ENCODE measurements at regions of chr5 and their contacts with region 1.

Region 1: GRCh38 chr5:134411546-134412266 is at the start of gene CDKN2AIPNL:
- DNase-seq: peak; percentile 34
- ATAC-seq: peak; percentile 99
- H3K4me3 ChIP-seq: peak within 1 kb of the TSS; percentile 85
- H3K27ac ChIP-seq: peak within 1 kb of the TSS; percentile 69
- H3K4me1 ChIP-seq: peaks cover 4% of the 10 kb centered on the region; the same call in 1 of the 2 replicates
- H3K27me3 ChIP-seq: no peaks in the 10 kb centered on the region
- CTCF ChIP-seq: peak; percentile 76 to 88 (median 81)
- EP300 ChIP-seq: peak in 1 of 2 experiments; percentile 46; a peak in 1 of 4 replicates
- POLR2A ChIP-seq: peak; percentile 94
- RAD21 ChIP-seq: peak; percentile 66
- polyA plus RNA-seq, gene CDKN2AIPNL: 23.5 to 29.9 TPM

Region 2: DNA sequence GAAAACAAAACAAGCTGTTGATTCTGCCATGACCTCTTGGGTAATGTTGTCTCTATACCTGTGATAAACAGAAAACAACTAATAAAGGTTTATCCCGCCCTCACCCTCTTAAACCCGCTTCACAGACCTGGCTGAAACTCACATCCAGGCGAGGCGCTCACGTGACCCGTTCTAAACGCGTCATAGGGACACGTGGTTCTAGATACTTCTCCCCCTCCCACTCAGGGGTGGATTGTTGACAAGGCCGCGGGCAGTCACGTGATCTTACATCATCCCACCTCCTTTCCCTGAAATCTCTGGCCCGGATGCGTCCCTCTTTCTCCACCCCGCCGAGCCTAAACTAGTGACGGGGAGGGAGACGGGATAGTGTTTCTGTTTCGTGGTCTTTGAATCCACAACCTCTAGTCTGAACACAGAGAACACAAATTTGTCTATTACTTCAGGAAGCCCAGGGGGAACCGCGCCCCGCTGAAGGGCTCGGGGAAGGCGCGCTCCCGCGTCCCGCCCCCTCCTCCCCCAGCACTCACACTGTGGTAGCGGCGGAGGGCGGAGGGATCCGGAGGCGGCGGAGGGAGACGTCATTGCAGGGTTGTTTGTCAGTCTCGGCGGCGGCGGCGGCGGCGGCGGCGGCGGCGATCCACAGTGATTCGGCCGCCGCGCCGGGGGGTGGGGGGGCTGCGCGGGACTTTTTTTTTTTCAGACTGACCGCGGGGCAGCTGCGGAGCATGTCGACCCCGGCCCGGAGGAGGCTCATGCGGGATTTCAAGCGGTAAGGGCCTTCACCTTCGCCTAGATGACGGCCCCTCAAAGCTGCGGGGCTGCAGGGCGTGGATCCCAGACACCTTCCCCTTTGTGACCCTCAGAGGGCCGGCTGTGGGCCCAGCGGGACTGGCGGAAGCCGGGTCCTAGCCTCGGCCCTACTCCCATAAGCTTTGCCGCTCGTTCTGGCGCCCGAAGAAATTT is 40.6 kb before region 1 on chr5 and contains the start of gene UBE2B:
- CTCF ChIA-PET with region 1: interaction called, 15 read pairs
- POLR2A ChIA-PET with region 1: interaction called, 12 read pairs
- RAD21 ChIA-PET with region 1: interaction called, 6 read pairs
- SMC1A ChIA-PET with region 1: interaction called, 29 read pairs
- in situ Hi-C with region 1: no loop called
- intact Hi-C with region 1: no loop called
- DNase-seq: peak; percentile 97
- ATAC-seq: peak; percentile 75
- H3K4me3 ChIP-seq: peak within 1 kb of the TSS; percentile 99
- H3K27ac ChIP-seq: peak within 1 kb of the TSS; percentile 89
- H3K4me1 ChIP-seq: peaks cover 2% of the 10 kb centered on the region; the same call in 1 of the 2 replicates
- H3K27me3 ChIP-seq: no peaks in the 10 kb centered on the region
- CTCF ChIP-seq: no peak
- EP300 ChIP-seq: peak in 1 of 2 experiments; percentile 73
- POLR2A ChIP-seq: peak; percentile 76
- RAD21 ChIP-seq: no peak
- polyA plus RNA-seq, gene UBE2B: 126 to 154 TPM

Region 3: GRCh38 chr5:134430001-134430569 is 18.4 kb after region 1 on chr5:
- CTCF ChIA-PET with region 1: interaction called, 11 read pairs
- POLR2A ChIA-PET with region 1: interaction called, 3 read pairs
- RAD21 ChIA-PET with region 1: interaction called, 6 read pairs
- SMC1A ChIA-PET with region 1: interaction called, 6 read pairs
- in situ Hi-C with region 1: no loop called
- intact Hi-C with region 1: no loop called
- DNase-seq: no peak
- ATAC-seq: peak; percentile 67
- H3K4me3 ChIP-seq: no peak overlapping the region
- H3K27ac ChIP-seq: no peak overlapping the region
- H3K4me1 ChIP-seq: peaks cover 6% of the 10 kb centered on the region; the same call in 1 of the 2 replicates
- H3K27me3 ChIP-seq: no peaks in the 10 kb centered on the region
- CTCF ChIP-seq: no peak
- EP300 ChIP-seq: no peak
- POLR2A ChIP-seq: no peak
- RAD21 ChIP-seq: no peak

Region 4: DNA sequence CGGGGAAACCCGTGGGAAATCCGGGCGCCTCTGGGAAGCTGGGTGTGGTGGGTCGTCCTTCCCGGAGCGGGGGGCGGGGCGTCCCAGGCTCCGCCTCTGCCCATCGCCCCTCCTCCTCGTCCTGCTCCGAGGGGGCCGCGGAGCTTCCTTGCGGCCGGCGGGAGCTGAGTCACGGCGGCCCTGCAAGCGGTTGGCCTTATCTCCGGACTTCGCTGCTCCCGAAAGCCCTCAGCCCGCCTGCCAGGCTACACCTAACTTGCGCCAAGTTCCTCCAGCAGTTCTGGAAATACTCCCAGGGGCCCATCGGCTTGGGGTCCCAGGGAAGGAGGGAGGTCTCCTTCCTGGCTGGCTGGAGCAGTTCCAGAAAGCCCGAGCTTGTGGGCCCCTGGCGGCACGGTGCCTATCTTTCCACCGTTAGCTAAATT is 54.1 kb after region 1 on chr5:
- CTCF ChIA-PET with region 1: interaction called, 17 read pairs
- POLR2A ChIA-PET with region 1: interaction called, 3 read pairs
- RAD21 ChIA-PET with region 1: interaction called, 20 read pairs
- SMC1A ChIA-PET with region 1: interaction called, 7 read pairs
- in situ Hi-C with region 1: no loop called
- intact Hi-C with region 1: no loop called
- DNase-seq: peak; percentile 43
- ATAC-seq: peak; percentile 93
- H3K4me3 ChIP-seq: peak overlapping the region; percentile 99
- H3K27ac ChIP-seq: peak overlapping the region; percentile 82
- H3K4me1 ChIP-seq: peaks cover 11% of the 10 kb centered on the region
- H3K27me3 ChIP-seq: no peaks in the 10 kb centered on the region
- CTCF ChIP-seq: no peak
- EP300 ChIP-seq: no peak
- POLR2A ChIP-seq: peak; percentile 85
- RAD21 ChIP-seq: no peak

Region 5: DNA sequence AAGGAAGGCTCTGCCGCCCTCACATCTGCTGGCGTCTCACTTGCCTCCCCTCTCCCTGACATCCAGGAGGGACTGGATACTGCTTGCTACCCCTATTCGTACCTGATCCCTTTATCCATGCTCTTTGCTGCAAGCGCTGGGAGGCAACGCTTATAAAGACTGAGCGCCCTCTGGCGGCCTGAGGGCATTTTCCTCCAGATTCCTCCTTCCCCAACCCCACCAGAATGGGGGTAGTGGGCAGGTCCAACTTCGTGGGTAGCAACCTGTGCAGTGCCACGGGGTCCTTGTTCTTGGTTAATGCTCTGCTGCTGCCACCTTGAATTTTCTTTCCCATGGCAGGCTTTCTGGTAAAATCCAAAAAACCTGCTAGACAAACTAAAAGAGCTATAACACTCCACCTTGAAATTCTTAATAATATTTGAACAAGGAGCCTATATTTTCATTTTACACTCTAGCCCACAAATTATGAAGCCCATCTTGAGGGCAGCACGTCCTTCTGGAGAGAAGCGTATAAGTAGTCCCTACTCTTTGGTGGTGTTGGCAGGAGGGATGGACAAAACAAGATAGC is 166.2 kb after region 1 on chr5:
- CTCF ChIA-PET with region 1: interaction called, 12 read pairs
- POLR2A ChIA-PET with region 1: interaction called, 3 read pairs
- RAD21 ChIA-PET with region 1: interaction called, 9 read pairs
- SMC1A ChIA-PET with region 1: interaction called, 11 read pairs
- in situ Hi-C with region 1: loop called (anchors 5 kb)
- intact Hi-C with region 1: no loop called
- DNase-seq: no peak
- ATAC-seq: peak; percentile 92
- H3K4me3 ChIP-seq: no peak overlapping the region
- H3K27ac ChIP-seq: no peak overlapping the region
- H3K4me1 ChIP-seq: no peaks in the 10 kb centered on the region
- H3K27me3 ChIP-seq: no peaks in the 10 kb centered on the region
- CTCF ChIP-seq: peak; percentile 79 to 91 (median 87)
- EP300 ChIP-seq: no peak
- POLR2A ChIP-seq: no peak
- RAD21 ChIP-seq: peak; percentile 92

Measured in GM12878 (cell line).